Posterior vena cava (tissue), 2 donors: ENCODE measurements at regions of chr22 and their contacts with region 1.

Region 1: DNA sequence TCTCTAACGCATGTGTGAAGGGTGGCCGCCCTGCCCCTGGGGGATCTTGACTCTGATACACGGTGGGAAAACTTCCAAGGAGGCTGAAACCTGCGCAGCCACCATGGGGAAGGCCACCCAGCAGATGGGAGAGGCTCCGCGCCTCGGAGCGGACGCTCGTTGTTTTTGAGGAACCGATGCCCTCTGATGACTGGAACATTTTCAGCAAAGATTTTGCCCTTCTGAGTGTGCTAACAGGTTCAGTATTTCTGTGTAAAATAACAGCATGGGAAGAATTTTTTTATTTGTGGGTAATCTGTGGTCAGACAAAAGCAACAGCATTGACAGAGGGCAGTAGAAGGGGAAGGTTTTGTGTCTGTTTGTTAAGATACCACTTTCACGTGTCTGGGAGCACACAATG is 16.7 kb downstream of the MB start:
- DNase-seq: no peak

Region 2: DNA sequence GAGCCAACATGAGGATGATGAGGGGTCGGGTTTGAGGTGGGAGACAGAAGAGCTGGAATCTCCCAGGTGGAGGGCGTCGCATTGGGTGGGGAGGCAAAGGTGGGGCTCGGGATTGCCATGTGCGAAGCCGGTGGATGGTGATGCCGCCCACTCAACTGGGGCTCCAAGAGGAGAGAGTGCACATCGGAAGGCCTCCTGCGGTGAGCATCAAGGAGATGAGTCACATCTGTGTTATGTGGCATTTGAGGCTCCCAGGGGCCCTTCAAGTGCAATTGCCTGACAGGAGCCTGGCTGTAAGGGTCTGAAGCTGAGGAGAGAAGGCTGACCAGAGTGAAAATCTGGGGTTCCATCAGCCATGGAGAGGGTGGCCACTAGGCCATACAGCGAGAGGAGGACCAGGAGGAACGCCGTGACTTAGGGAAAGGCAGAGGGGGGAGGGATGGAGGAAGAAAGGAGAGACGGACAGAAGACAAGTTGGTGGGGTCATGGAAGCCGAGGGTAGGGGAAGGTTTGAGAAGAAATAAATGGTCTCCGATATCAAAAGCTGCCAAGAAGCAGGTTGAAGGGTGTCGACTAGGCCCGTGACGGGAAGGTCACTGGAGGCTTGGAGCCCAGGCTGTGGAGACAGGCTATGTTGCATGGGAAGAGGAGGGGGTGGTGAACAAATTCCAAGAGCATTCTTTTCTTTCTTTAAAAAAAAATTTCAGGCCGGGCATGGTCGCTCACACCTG is 38.5 kb before region 1 on chr22:
- intact Hi-C with region 1: loop called in 1 of 2 experiments (anchors 1 kb)
- DNase-seq: no peak